ENCODE measurements at regions of chr5 and their contacts with region 1.

Region 1: DNA sequence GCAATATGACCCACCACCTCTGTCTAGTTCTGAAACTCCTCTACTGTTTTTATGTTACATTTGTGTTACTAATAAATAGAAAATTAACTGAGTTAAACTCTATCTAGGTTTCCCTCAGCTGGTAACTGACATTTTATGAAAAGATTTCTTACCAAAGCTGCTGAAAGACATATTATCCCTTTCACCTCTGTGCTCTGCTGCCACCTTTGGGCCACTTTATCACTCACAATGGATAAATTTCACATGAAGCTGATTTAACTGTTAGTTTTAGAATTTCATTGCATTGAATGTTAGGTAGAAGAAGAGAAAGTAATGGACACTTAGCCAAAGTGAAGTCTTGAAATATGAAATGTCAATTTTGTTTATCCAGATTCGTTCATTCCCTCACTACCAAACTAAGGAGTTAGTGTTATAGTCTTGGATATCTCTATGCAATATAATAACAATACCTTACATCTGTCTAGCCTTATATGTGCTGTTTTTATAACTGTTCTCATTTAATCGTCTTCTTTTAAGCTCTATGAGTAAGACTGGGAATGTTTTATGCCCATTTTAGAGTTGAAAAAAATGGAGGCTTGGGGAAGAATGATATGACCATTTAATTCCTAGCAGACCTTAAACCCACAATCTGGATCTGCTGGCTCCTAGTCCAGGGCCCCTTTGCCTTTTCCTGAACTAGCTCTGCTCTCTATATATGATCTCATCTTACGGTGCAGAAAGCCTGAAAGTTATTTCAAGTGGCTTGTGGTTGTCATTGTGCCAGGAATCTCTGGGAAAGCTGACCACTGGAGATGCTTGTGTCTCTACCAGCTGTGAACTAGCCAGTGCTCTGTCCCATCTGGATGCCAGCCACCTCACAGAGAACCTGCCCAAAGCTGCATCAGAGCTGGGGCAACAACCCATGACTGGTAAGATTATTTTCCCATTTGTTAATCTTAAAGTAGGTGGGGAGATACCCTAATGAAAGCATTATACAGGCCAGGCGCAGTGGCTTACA is 97.1 kb downstream of the GOLPH3 start:
- DNase-seq: peak; percentile 73
- ATAC-seq: peak; percentile 59

Region 2: DNA sequence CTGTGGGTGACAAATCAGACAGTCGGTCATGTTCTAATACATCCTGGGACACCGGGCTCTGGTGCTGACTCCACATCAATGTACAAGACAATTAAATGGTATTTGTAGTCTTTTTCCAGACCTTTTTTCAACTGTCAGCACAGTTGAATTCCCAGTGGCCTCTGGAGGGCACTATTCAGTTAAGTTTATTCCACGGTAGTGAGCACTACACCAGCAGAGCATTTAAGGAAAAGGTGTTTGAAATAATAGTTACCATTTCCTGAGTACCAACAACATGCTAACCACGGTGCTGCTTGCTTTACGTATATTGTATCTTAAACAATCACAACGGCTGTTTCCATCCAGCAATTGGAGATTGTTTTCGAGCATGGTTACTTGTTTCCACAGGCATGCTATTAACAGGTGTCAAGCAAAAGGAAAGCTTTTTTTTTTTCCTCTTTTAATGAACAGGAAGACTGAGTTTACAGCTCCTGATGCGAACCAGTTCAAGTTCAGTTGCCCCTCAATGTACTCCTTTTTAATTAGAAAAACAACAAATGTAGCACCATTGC is 251.4 kb before region 1 on chr5:
- intact Hi-C with region 1: loop called (anchors 10 kb)
- DNase-seq: peak; percentile 65
- ATAC-seq: peak; percentile 87

Region 3: GRCh38 chr5:32027717-32028321 is 49.2 kb before region 1 on chr5:
- intact Hi-C with region 1: no loop called
- DNase-seq: peak; percentile 68
- ATAC-seq: peak; percentile 95

Region 4: DNA sequence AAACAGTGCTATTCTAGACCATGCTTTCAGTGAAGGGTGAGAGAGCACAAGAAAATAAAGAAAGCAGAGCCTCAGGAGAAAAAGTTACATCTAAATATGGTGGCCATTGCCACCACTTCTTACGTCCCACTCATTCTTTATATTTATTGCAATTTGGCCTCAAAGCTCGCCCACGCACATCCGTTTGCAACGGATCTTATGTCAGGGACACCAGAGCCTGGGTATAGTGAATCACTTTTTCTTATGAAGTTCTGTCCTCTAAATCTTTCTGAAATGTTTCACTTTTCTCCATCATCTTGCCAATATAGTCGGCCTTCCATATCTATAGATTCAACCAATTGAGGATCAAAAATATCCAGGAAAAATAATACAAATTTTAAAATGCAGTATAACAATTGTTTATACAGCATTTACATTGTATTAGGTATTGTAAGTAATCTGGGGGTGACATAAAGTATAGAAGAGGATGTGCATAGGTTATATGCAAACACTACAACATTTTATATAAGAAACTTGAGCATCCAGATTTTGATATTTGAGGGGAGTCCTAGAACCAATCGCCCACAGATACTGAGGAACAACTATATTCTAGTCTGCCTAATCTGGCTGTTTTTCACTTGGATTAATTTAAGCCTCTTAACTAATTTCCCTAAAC is 62.0 kb after region 1 on chr5:
- intact Hi-C with region 1: no loop called
- DNase-seq: no peak
- ATAC-seq: no peak

Measured in sciatic nerve (tissue), 2 donors.